BJ (cell line): ENCODE measurements at regions of chr3 and their contacts with region 1.

Region 1: DNA sequence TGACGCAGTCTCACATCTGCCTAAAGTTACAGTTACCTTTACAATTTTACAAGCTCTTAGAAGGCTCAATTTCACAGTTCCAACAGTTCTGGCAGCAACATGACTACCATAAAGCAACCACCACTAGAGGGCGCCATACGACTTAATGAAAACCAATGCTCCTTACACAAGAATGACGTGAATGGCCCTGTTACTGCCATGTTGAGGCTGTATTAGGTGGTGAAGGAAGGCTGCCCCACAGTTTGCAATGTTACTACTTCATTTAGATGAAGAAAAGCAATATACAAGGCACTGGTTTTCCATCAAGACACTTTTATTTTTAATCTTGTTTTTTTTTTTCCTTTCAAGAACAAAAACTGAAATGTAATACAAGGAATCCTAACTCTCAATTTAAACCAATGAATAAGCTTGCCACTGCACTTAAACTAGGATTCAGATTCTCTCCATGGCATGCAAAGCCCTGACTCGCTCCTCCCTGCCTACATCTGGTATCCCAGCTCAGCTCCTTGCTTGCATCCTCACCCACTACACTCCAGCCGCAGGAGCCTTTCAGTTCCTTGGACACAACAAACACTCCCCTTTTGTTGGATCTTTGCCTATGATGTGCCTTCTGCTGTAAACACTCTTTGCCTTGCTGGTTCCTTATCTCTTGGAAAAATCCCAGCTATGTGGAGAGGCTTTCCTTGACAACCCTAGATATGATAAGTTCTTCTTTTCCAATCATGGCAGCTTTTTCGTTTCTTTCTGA is 270.7 kb downstream of the GBE1 start:
- DNase-seq: no peak
- H3K4me3 ChIP-seq: no peak overlapping the region
- H3K27me3 ChIP-seq: no peaks in the 10 kb centered on the region
- CTCF ChIP-seq: peak; percentile 72

Region 2: GRCh38 chr3:80688814-80689213 is 801.9 kb before region 1 on chr3:
- CTCF ChIA-PET with region 1: no interaction called
- POLR2A ChIA-PET with region 1: no interaction called
- DNase-seq: no peak
- H3K4me3 ChIP-seq: no peak overlapping the region
- H3K27me3 ChIP-seq: no peaks in the 10 kb centered on the region
- CTCF ChIP-seq: peak; percentile 9; the same call in 1 of the 2 replicates

Region 3: GRCh38 chr3:81476692-81477091 is 14.0 kb before region 1 on chr3:
- CTCF ChIA-PET with region 1: interaction called, 20 read pairs
- POLR2A ChIA-PET with region 1: no interaction called
- DNase-seq: no peak
- H3K4me3 ChIP-seq: no peak overlapping the region
- H3K27me3 ChIP-seq: no peaks in the 10 kb centered on the region
- CTCF ChIP-seq: no peak

Region 4: GRCh38 chr3:81531263-81531662 is 40.5 kb after region 1 on chr3:
- CTCF ChIA-PET with region 1: no interaction called
- POLR2A ChIA-PET with region 1: no interaction called
- DNase-seq: no peak
- H3K4me3 ChIP-seq: no peak overlapping the region
- H3K27me3 ChIP-seq: no peaks in the 10 kb centered on the region
- CTCF ChIP-seq: no peak